ENCODE measurements at regions of chr5 and their contacts with region 1.

Region 1: GRCh38 chr5:60943624-60944023 is 1.2 kb downstream of the ERCC8 start:
- DNase-seq: no peak
- H3K4me3 ChIP-seq: no peak overlapping the region
- H3K27ac ChIP-seq: no peak overlapping the region
- H3K4me1 ChIP-seq: no peaks in the 10 kb centered on the region
- H3K27me3 ChIP-seq: no peaks in the 10 kb centered on the region
- CTCF ChIP-seq: no peak
- POLR2A ChIP-seq: no peak

Region 2: DNA sequence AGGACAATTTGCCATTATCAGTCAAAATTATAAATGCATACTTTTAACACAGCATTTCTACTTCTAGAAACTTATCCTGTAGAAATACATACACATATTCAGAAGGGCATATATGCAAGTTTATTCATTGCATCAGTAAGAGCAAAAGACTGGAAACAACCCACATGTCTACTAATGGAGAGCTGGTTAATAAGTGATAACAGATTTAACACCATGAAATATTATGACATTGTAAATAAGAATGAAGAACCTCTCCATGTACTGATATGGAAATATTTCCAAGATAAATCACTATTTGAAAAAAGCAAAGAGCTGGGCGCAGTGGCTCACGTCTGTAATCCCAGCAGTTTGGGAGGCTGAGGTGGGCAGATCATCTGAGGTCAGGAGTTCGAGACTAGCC is 154.1 kb before region 1 on chr5:
- intact Hi-C with region 1: no loop called
- DNase-seq: no peak
- H3K4me3 ChIP-seq: no peak overlapping the region
- H3K27ac ChIP-seq: no peak overlapping the region
- H3K4me1 ChIP-seq: no peaks in the 10 kb centered on the region
- H3K27me3 ChIP-seq: no peaks in the 10 kb centered on the region
- CTCF ChIP-seq: no peak
- POLR2A ChIP-seq: no peak

Region 3: DNA sequence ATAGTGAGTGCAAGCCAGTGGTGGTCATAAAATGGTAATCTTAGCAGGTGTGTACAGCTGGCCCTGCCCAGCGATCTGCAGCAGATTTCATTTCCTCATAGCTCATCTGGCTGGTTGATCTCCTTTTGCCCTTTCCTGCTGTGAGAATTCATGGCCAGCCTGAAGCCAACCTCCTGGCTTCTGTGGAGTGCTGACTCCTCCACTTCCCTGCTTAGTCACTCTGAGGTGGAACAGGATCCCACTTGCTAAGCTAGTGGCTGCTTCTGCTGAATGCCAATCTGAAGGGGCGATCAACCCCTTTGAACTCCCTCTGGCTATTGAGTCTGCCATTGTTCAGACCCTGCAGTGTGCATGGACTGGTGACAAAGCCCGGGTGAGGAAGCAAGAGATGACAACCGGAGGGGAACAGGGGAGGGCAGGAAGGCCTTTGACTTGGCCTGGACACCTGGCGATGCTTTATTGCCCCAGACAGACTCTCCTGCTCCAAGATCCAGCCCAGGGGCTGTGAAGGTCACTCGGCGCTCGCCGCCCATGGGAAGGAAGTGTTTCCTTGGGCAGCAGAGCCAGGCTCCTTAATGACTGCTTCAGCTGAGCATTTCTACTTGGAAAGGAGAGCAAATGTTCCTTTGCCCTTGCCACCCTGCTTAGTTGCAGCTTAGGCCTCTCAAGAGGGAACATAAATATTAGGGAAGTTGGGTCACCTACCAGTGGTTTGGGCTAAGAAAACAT is 729.5 kb after region 1 on chr5:
- intact Hi-C with region 1: loop called (anchors 5 kb)
- DNase-seq: no peak
- H3K4me3 ChIP-seq: no peak overlapping the region
- H3K27ac ChIP-seq: no peak overlapping the region
- H3K4me1 ChIP-seq: no peaks in the 10 kb centered on the region
- H3K27me3 ChIP-seq: no peaks in the 10 kb centered on the region
- CTCF ChIP-seq: no peak
- POLR2A ChIP-seq: no peak

Measured in breast epithelium (tissue), 4 donors.